ENCODE measurements at regions of chr1 and their contacts with region 1.

Region 1: DNA sequence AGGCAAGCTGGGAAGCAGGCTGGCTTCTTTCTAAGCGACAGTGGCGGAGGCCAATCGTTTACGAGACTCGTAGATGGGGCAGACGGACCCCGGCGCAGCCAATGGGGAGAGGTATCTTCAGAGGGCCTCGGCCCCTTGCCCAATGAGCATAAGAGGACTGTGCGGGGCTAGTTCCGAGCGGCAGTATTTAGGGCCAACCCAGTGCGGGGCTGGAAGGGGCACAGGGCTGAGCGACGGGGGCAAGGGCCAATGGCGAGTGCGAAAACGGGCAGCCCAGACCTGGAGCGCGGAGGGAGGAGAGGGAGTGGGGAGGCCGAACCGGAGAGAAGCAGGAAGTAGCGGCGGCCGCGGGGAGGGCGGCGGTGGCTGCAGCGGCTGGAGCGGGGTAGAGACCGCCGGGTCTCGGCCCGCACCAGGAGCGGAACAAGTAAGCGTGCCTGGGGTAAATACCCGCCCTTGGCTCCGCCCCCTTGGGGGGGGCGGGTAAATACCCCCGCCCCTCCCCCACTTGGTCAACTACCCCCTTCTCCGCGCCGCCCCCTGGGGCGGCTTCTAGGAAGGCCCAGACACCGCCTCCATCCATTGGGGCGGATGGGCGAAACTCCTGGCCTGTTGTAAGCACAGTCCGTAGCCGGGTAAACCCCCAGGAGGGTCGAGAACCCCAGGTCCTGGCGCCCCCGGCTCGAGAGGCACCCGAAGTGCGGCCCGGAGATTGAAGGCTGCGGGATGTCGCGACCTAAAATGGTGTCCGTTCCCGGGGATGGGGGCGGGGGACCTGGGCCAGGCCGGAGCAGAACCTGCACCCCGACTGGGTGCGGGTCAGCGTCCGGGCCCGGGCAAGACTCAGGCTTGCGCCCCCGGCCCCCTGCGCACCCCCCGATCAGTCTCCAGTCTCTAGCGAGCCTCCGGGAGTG is at the start of gene ZNF687:
- DNase-seq: peak; percentile 94 to 100 (median 97)
- ATAC-seq: peak; percentile 85
- H3K4me3 ChIP-seq: peak within 1 kb of the TSS; percentile 64
- H3K4me3 Mint-ChIP-seq: peak within 1 kb of the TSS; percentile 98
- H3K27ac ChIP-seq: peak within 1 kb of the TSS; percentile 92 to 95
- H3K27ac Mint-ChIP-seq: peak within 1 kb of the TSS; percentile 93
- H3K4me1 ChIP-seq: peaks cover 38% of the 10 kb centered on the region
- H3K4me1 Mint-ChIP-seq: peaks cover 42% of the 10 kb centered on the region
- H3K27me3 ChIP-seq: no peaks in the 10 kb centered on the region
- H3K27me3 Mint-ChIP-seq: no peaks in the 10 kb centered on the region
- CTCF ChIP-seq: no peak
- total RNA-seq, gene ZNF687: 38.9 to 40.0 TPM

Region 2: DNA sequence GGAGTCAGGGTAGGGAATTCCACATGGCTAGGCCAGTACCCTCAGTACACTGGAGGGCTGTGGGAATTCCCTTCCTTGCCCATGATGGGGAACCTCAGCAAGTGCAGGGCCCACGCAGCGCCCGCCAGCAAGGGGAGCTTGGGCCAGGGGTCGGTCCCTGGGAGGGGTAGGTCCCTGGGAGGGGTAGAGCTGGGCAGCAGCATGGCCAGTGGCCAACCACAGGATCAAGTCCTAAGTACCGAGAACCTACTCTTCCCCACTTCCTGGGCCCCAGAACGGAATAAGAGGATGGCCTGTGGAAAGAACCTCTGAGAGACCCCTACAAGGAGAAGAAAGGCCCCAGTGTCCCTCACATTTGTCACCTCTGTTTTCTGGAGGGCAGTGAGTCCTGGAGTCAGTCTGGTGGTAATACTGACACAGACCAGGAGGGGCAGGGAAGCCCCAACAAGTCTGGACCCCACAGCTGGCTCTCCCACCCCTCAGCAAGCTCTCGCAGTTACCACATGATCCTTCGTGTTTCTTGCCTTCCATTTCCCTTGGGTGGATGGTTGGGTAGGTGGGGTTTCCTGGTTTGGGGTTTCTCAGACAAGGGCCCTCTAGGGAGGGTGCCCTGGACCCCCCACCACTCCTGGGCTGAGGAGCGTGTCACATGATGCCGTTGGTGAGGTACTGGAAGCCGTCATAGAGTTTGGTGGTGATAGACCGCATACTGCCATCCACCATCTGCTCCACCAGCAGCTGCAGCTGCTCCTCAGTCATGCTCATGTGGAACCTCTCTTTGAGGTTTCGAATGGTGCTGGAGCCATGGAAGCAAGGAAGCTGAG is 10.2 kb after region 1 on chr1:
- CTCF ChIA-PET with region 1: interaction called, 6 read pairs
- POLR2A ChIA-PET with region 1: interaction called, 12 read pairs
- intact Hi-C with region 1: no loop called
- DNase-seq: peak in 1 of 14 experiments; percentile 32
- ATAC-seq: peak; percentile 39
- H3K4me3 ChIP-seq: no peak overlapping the region
- H3K4me3 Mint-ChIP-seq: no peak overlapping the region
- H3K27ac ChIP-seq: no peak overlapping the region
- H3K27ac Mint-ChIP-seq: peak overlapping the region; percentile 51
- H3K4me1 ChIP-seq: peaks cover 25% of the 10 kb centered on the region
- H3K4me1 Mint-ChIP-seq: peaks cover 7% of the 10 kb centered on the region
- H3K27me3 ChIP-seq: no peaks in the 10 kb centered on the region
- H3K27me3 Mint-ChIP-seq: no peaks in the 10 kb centered on the region
- CTCF ChIP-seq: no peak

Region 3: GRCh38 chr1:151340870-151341754 is 58.9 kb after region 1 on chr1:
- CTCF ChIA-PET with region 1: interaction called, 21 read pairs
- POLR2A ChIA-PET with region 1: interaction called, 11 read pairs
- intact Hi-C with region 1: loop called (anchors 1 to 2 kb)
- DNase-seq: peak in 10 of 14 experiments; percentile 12 to 85 (median 38)
- ATAC-seq: peak; percentile 93
- H3K4me3 ChIP-seq: no peak overlapping the region
- H3K4me3 Mint-ChIP-seq: no peak overlapping the region
- H3K27ac ChIP-seq: no peak overlapping the region
- H3K27ac Mint-ChIP-seq: peak overlapping the region; percentile 7
- H3K4me1 ChIP-seq: peaks cover 20% of the 10 kb centered on the region
- H3K4me1 Mint-ChIP-seq: peaks cover 21% of the 10 kb centered on the region
- H3K27me3 ChIP-seq: no peaks in the 10 kb centered on the region
- H3K27me3 Mint-ChIP-seq: no peaks in the 10 kb centered on the region
- CTCF ChIP-seq: peak; percentile 85

Region 4: GRCh38 chr1:151399890-151400495 is 117.8 kb after region 1 on chr1:
- CTCF ChIA-PET with region 1: interaction called, 6 read pairs
- POLR2A ChIA-PET with region 1: interaction called, 10 read pairs
- intact Hi-C with region 1: loop called (anchors 1 to 5 kb)
- DNase-seq: peak in 4 of 14 experiments; percentile 15 to 49 (median 39)
- ATAC-seq: peak; percentile 1
- H3K4me3 ChIP-seq: peak overlapping the region; percentile 99
- H3K4me3 Mint-ChIP-seq: peak overlapping the region; percentile 93
- H3K27ac ChIP-seq: peak overlapping the region; percentile 91 to 97
- H3K27ac Mint-ChIP-seq: peak overlapping the region; percentile 93
- H3K4me1 ChIP-seq: peaks cover 29% of the 10 kb centered on the region
- H3K4me1 Mint-ChIP-seq: peaks cover 27% of the 10 kb centered on the region
- H3K27me3 ChIP-seq: no peaks in the 10 kb centered on the region
- H3K27me3 Mint-ChIP-seq: no peaks in the 10 kb centered on the region
- CTCF ChIP-seq: no peak

Region 5: DNA sequence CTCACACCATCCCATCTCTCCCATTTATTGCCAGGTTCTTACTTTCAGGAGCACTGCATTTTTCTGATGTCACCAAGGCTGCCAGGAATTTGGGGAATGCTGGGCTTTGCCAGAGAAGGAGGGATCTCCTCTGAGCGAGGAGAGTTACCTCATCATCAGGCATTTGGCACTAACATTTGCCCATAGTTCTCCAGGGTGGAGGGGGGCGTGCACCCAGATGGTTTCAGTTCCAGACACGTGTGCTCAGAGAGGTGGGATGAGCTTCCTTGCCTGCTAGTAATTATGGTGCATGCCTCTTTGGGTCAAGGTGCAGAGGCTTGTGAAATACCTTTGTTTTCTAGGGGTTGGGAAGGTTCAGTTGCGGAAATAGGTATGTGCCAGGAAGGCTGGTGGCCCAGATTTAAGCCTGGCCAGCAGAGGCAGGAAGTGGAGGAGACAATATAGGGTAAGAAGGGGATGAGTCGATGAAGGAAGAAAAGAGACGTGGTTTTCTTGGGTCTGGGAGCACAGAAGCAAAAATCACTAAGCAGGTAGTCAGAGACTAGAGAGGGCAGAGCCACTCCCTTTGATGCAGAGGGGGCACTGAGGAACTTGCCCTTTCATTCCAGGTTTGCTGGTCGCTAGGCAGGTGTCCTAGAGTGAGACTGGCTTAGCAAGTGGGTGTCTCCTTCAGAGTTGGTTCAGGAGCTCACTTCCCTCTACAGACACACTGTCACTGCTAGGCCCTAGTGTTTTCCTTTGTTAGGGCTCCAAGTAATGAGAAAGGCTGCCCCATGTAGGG is 265.1 kb after region 1 on chr1:
- CTCF ChIA-PET with region 1: no interaction called
- POLR2A ChIA-PET with region 1: no interaction called
- intact Hi-C with region 1: no loop called
- DNase-seq: no peak
- ATAC-seq: no peak
- H3K4me3 ChIP-seq: no peak overlapping the region
- H3K4me3 Mint-ChIP-seq: no peak overlapping the region
- H3K27ac ChIP-seq: no peak overlapping the region
- H3K27ac Mint-ChIP-seq: no peak overlapping the region
- H3K4me1 ChIP-seq: peaks cover 11% of the 10 kb centered on the region
- H3K4me1 Mint-ChIP-seq: peaks cover 10% of the 10 kb centered on the region
- H3K27me3 ChIP-seq: no peaks in the 10 kb centered on the region
- H3K27me3 Mint-ChIP-seq: no peaks in the 10 kb centered on the region
- CTCF ChIP-seq: no peak

Measured in CD4-positive, alpha-beta T cell (primary cell).